Motor neuron (in vitro differentiated cells): ENCODE measurements at regions of chr1 and their contacts with region 1.

Region 1: DNA sequence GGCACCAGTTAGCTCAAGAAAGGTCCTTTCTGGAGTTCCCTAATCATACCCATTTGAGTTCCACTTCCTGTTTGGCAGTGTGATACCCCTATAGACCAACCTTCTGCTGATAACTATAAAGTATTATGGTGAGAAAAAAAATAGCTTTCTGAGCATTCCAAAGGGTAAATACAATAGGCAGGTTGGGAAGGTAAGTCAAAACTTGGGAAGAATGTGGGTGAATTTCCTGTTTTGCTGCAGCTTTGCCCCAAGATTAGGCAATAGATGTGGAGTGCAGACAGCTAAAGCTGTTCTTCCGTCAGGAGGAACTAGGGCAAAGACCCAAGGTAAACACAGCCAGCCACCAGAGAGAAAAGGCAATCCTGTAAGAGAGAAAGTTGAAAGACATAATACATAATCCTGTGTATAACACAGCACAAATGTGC is 49.9 kb upstream of the GUCA2A start:
- ATAC-seq: peak in 1 of 8 experiments; percentile 23
- H3K4me3 ChIP-seq: no peak overlapping the region
- H3K27ac ChIP-seq: no peak overlapping the region
- H3K4me1 ChIP-seq: no peaks in the 10 kb centered on the region

Region 2: DNA sequence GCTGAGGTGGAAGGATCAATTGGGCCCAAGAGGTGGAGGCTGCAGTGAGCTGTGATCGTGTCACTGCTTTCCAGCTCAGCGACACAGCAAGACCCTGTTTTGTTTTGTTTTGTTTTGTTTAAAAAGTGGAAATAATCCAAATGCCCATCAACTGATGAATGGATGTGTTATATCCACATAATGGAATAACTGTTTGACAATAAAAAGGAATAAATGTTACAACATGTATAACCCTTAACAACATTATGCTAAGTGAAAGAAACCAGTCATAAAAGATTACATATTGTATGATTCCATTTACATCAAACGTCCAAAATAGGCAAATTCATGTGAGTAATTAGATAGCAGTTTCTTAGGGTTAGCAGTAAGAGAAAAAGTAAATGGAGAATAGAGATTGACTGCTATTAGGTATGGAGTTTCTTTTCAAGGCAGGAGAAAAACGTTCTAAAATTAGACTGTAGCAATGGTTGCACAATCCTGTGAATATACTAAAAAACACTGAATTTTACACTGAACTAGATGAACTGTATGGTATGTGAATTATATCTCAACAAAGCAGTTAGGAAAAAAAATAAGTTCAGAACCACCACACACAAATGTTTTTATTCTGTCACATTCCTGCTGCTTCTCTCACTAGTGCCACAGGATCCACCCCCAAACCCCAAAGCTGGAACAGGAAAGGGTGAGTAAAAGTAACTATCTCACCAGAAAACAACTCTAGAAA is 104.8 kb after region 1 on chr1:
- in situ Hi-C with region 1: loop called in 1 of 9 experiments (anchors 25 kb)
- ATAC-seq: no peak
- H3K4me3 ChIP-seq: no peak overlapping the region
- H3K27ac ChIP-seq: no peak overlapping the region
- H3K4me1 ChIP-seq: peaks cover 7 to 15% of the 10 kb centered on the region in 2 donors

Region 3: GRCh38 chr1:42886800-42887199 is 672.3 kb after region 1 on chr1:
- in situ Hi-C with region 1: no loop called
- ATAC-seq: no peak
- H3K4me3 ChIP-seq: no peak overlapping the region
- H3K27ac ChIP-seq: no peak overlapping the region
- H3K4me1 ChIP-seq: peaks cover 0 to 3% of the 10 kb centered on the region in 2 donors

Region 4: GRCh38 chr1:43565600-43566360 is 1351.3 kb after region 1 on chr1:
- in situ Hi-C with region 1: no loop called
- ATAC-seq: peak; percentile 88 to 97 (median 91)
- H3K4me3 ChIP-seq: peak overlapping the region in 4 of 5 donors; percentile 14 to 31 (median 17)
- H3K27ac ChIP-seq: peak overlapping the region; percentile 50 to 54
- H3K4me1 ChIP-seq: peaks cover 51 to 55% of the 10 kb centered on the region in 2 donors